PC-3 (cell line): ENCODE measurements at regions of chr2 and their contacts with region 1.

Region 1: GRCh38 chr2:29834624-29835023 is 86.8 kb downstream of the ALK start:
- DNase-seq: peak; percentile 81
- ATAC-seq: peak; percentile 64
- H3K4me3 ChIP-seq: peak overlapping the region; percentile 15; the same call in 1 of the 2 replicates
- H3K27ac ChIP-seq: peak overlapping the region; percentile 46
- H3K4me1 ChIP-seq: peaks cover 20% of the 10 kb centered on the region
- H3K27me3 ChIP-seq: no peaks in the 10 kb centered on the region
- CTCF ChIP-seq: no peak

Region 2: GRCh38 chr2:29238497-29238896 is 596.1 kb before region 1 on chr2:
- CTCF ChIA-PET with region 1: no interaction called
- POLR2A ChIA-PET with region 1: no interaction called
- intact Hi-C with region 1: loop called (anchors 10 kb)
- DNase-seq: peak; percentile 71
- ATAC-seq: peak; percentile 77
- H3K4me3 ChIP-seq: no peak overlapping the region
- H3K27ac ChIP-seq: no peak overlapping the region
- H3K4me1 ChIP-seq: peaks cover 7% of the 10 kb centered on the region
- H3K27me3 ChIP-seq: no peaks in the 10 kb centered on the region
- CTCF ChIP-seq: peak; percentile 88